HepG2 (cell line): ENCODE measurements at regions of chr9 and their contacts with region 1.

Region 1: GRCh38 chr9:26326473-26327044 is 566.0 kb downstream of the CAAP1 start:
- DNase-seq: peak; percentile 44
- ATAC-seq: peak; percentile 83
- H3K4me3 ChIP-seq: no peak overlapping the region
- H3K27ac ChIP-seq: no peak overlapping the region
- H3K4me1 ChIP-seq: no peaks in the 10 kb centered on the region
- H3K27me3 ChIP-seq: no peaks in the 10 kb centered on the region
- CTCF ChIP-seq: peak; percentile 71
- EP300 ChIP-seq: no peak
- POLR2A ChIP-seq: no peak
- RAD21 ChIP-seq: 0 out of 2 replicates have a peak, but pooled peaks have one; percentile 31

Region 2: DNA sequence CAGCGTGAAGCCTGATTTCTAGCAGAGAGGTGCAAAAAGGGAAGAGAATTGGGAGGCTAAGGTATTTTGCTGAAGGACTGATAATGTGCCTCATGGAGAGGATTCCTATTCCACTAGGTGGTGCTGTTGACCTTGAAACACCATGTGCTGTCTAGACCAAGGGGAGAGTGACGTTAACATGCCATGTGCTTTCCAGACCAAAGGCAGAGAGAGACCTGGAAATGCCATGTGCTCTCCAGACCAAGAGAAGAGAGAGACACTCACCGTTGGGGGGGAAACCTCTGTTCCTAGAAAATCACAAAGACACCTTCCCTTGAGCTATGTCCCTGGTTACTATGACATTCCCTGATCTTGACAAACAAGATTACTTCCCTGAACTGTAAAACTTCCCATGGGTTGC is 362.3 kb before region 1 on chr9:
- CTCF ChIA-PET with region 1: interaction called, 6 read pairs
- POLR2A ChIA-PET with region 1: no interaction called
- in situ Hi-C with region 1: loop called (anchors 25 kb)
- intact Hi-C with region 1: loop called (anchors 1 kb)
- DNase-seq: peak; percentile 47
- ATAC-seq: peak; percentile 67
- H3K4me3 ChIP-seq: no peak overlapping the region
- H3K27ac ChIP-seq: no peak overlapping the region
- H3K4me1 ChIP-seq: no peaks in the 10 kb centered on the region
- H3K27me3 ChIP-seq: no peaks in the 10 kb centered on the region
- CTCF ChIP-seq: peak; percentile 46
- EP300 ChIP-seq: no peak
- POLR2A ChIP-seq: no peak
- RAD21 ChIP-seq: 0 out of 2 replicates have a peak, but pooled peaks have one; percentile 15

Region 3: DNA sequence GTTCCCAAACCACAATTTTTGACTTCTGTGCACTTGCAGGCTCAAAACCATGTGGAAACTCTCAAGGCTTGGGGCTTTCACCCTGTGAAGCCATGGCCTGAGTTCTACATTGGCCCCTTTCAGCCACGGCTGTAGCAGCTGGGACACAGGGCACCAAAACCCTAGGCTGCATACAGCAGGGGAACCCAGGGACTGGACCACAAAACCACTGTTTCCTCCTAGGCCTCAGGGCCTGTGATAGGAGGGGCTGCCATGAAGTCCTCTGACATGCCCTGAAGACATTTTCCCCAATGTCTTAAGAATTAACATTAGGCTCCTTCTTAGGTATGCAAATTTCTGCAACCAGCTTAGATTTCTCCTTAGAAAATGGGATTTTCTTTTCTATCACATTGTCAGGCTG is 336.2 kb before region 1 on chr9:
- CTCF ChIA-PET with region 1: no interaction called
- POLR2A ChIA-PET with region 1: no interaction called
- in situ Hi-C with region 1: no loop called
- intact Hi-C with region 1: no loop called
- DNase-seq: no peak
- ATAC-seq: no peak
- H3K4me3 ChIP-seq: no peak overlapping the region
- H3K27ac ChIP-seq: no peak overlapping the region
- H3K4me1 ChIP-seq: no peaks in the 10 kb centered on the region
- H3K27me3 ChIP-seq: no peaks in the 10 kb centered on the region
- CTCF ChIP-seq: no peak
- EP300 ChIP-seq: no peak
- POLR2A ChIP-seq: no peak
- RAD21 ChIP-seq: no peak

Region 4: GRCh38 chr9:26234865-26235264 is 91.7 kb before region 1 on chr9:
- CTCF ChIA-PET with region 1: no interaction called
- POLR2A ChIA-PET with region 1: no interaction called
- in situ Hi-C with region 1: no loop called
- intact Hi-C with region 1: no loop called
- DNase-seq: no peak
- ATAC-seq: no peak
- H3K4me3 ChIP-seq: no peak overlapping the region
- H3K27ac ChIP-seq: no peak overlapping the region
- H3K4me1 ChIP-seq: no peaks in the 10 kb centered on the region
- H3K27me3 ChIP-seq: no peaks in the 10 kb centered on the region
- CTCF ChIP-seq: no peak
- EP300 ChIP-seq: no peak
- POLR2A ChIP-seq: no peak
- RAD21 ChIP-seq: no peak

Region 5: GRCh38 chr9:26612211-26612610 is 285.7 kb after region 1 on chr9:
- CTCF ChIA-PET with region 1: no interaction called
- POLR2A ChIA-PET with region 1: no interaction called
- in situ Hi-C with region 1: no loop called
- intact Hi-C with region 1: loop called (anchors 10 kb)
- DNase-seq: no peak
- ATAC-seq: no peak
- H3K4me3 ChIP-seq: no peak overlapping the region
- H3K27ac ChIP-seq: no peak overlapping the region
- H3K4me1 ChIP-seq: no peaks in the 10 kb centered on the region
- H3K27me3 ChIP-seq: no peaks in the 10 kb centered on the region
- CTCF ChIP-seq: no peak
- EP300 ChIP-seq: no peak
- POLR2A ChIP-seq: no peak
- RAD21 ChIP-seq: no peak